ENCODE measurements at regions of chr2 and their contacts with region 1.

Region 1: DNA sequence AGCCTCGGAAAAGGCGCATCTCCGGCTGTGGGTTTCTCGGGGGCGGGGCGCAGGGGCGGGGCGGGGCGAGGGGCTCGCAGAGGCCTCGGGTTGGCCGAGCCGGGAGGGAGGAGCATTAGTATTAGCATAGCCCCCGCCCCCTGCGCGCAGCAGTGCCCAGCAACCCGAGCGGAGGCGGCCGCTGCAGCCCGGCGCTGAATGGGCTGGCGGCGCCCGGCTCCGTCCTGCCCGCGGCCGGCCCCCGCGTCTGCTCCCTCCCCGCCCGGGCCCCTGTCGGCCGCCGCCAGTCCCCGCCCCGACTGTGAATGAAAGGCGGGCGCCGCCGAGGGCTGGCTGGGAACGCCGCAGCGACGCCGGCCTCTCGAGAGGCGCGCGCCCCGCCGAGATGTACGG is at the start of gene EFR3B:
- DNase-seq: peak; percentile 70 to 95 (median 88)
- ATAC-seq: peak; percentile 95
- H3K4me3 ChIP-seq: peak within 1 kb of the TSS; percentile 48 to 72
- H3K4me3 Mint-ChIP-seq: peak within 1 kb of the TSS; percentile 90
- H3K27ac ChIP-seq: no peak within 1 kb of the TSS
- H3K27ac Mint-ChIP-seq: peak within 1 kb of the TSS; percentile 6
- H3K4me1 ChIP-seq: peaks cover 17% of the 10 kb centered on the region
- H3K4me1 Mint-ChIP-seq: peaks cover 21% of the 10 kb centered on the region
- H3K27me3 ChIP-seq: peaks cover 3 to 16% of the 10 kb centered on the region in 2 experiments
- H3K27me3 Mint-ChIP-seq: peaks cover 35% of the 10 kb centered on the region
- CTCF ChIP-seq: no peak
- total RNA-seq, gene EFR3B: 0.08 TPM in 1 of 2 experiments, not detected in the other

Region 2: GRCh38 chr2:24490674-24491625 is 551.0 kb before region 1 on chr2 and contains the start of gene NCOA1:
- CTCF ChIA-PET with region 1: no interaction called
- POLR2A ChIA-PET with region 1: no interaction called
- intact Hi-C with region 1: loop called (anchors 5 to 10 kb)
- DNase-seq: peak; percentile 77 to 94 (median 89)
- ATAC-seq: peak; percentile 85
- H3K4me3 ChIP-seq: peak within 1 kb of the TSS; percentile 63 to 72
- H3K4me3 Mint-ChIP-seq: peak within 1 kb of the TSS; percentile 89
- H3K27ac ChIP-seq: peak within 1 kb of the TSS; percentile 70 to 93
- H3K27ac Mint-ChIP-seq: peak within 1 kb of the TSS; percentile 94
- H3K4me1 ChIP-seq: peaks cover 37% of the 10 kb centered on the region
- H3K4me1 Mint-ChIP-seq: peaks cover 53% of the 10 kb centered on the region
- H3K27me3 ChIP-seq: no peaks in the 10 kb centered on the region
- H3K27me3 Mint-ChIP-seq: no peaks in the 10 kb centered on the region
- CTCF ChIP-seq: no peak
- total RNA-seq, gene NCOA1: 32.6 to 33.5 TPM

Region 3: GRCh38 chr2:24920098-24920808 is 121.7 kb before region 1 on chr2 and contains the start of gene ADCY3:
- CTCF ChIA-PET with region 1: no interaction called
- POLR2A ChIA-PET with region 1: no interaction called
- intact Hi-C with region 1: loop called (anchors 2 to 5 kb)
- DNase-seq: peak; percentile 17 to 81 (median 58)
- ATAC-seq: peak; percentile 62
- H3K4me3 ChIP-seq: peak within 1 kb of the TSS; percentile 46 to 54
- H3K4me3 Mint-ChIP-seq: peak within 1 kb of the TSS; percentile 87
- H3K27ac ChIP-seq: peak within 1 kb of the TSS in 1 of 2 experiments; percentile 33
- H3K27ac Mint-ChIP-seq: peak within 1 kb of the TSS; percentile 77
- H3K4me1 ChIP-seq: peaks cover 35% of the 10 kb centered on the region
- H3K4me1 Mint-ChIP-seq: peaks cover 31% of the 10 kb centered on the region
- H3K27me3 ChIP-seq: no peaks in the 10 kb centered on the region
- H3K27me3 Mint-ChIP-seq: no peaks in the 10 kb centered on the region
- CTCF ChIP-seq: no peak
- total RNA-seq, gene ADCY3: 15.6 to 23.3 TPM

Region 4: GRCh38 chr2:25151718-25152117 is 109.8 kb after region 1 on chr2:
- CTCF ChIA-PET with region 1: no interaction called
- POLR2A ChIA-PET with region 1: no interaction called
- intact Hi-C with region 1: no loop called
- DNase-seq: no peak
- ATAC-seq: no peak
- H3K4me3 ChIP-seq: no peak overlapping the region
- H3K4me3 Mint-ChIP-seq: no peak overlapping the region
- H3K27ac ChIP-seq: no peak overlapping the region
- H3K27ac Mint-ChIP-seq: no peak overlapping the region
- H3K4me1 ChIP-seq: no peaks in the 10 kb centered on the region
- H3K4me1 Mint-ChIP-seq: no peaks in the 10 kb centered on the region
- H3K27me3 ChIP-seq: no peaks in the 10 kb centered on the region
- H3K27me3 Mint-ChIP-seq: peaks cover 4% of the 10 kb centered on the region
- CTCF ChIP-seq: no peak

Region 5: DNA sequence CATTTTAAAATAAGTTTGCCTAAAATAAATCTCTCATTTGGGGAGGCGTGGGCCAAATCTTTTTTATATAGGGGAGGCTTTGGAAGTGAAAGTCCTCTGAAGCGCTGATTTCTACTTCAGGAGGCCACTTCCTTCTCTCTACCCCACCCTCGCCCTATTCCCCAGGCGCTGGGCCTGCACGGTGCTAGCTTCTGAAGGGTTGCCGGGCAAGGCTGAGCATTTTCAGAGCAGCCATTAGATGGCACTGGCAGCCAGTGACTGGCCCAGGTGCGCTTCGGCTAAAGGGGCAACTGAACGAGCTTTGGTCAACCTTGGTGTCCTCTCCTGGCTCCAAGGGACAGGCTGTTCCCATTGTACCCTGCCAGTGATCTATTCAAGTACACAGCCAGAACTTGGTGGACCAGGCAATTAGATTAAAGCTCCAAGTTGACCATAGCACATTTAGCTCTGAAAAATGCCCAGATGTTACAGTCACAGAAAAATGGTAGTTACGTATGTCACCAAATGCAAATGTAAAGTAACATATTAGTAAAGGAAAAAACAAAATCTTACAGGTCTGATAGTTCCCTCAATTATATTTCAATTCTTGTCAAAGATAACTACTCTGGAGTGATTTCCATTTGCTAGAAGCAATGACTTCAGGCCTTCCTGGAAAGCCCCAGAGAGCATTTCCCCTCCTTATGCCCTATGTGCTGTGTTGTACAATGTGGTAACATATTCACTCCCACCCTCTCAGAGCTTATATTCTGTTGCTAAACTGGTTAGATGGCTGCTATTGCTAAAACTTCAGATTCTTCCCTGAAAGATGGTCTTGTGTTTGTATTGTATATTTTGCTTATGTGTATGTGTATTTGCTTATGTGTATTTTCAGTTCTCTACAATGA is 124.3 kb after region 1 on chr2:
- CTCF ChIA-PET with region 1: no interaction called
- POLR2A ChIA-PET with region 1: no interaction called
- intact Hi-C with region 1: loop called in 1 of 2 experiments (anchors 5 kb)
- DNase-seq: peak in 8 of 9 experiments; percentile 21 to 77 (median 46)
- ATAC-seq: peak; percentile 52
- H3K4me3 ChIP-seq: no peak overlapping the region
- H3K4me3 Mint-ChIP-seq: no peak overlapping the region
- H3K27ac ChIP-seq: no peak overlapping the region
- H3K27ac Mint-ChIP-seq: no peak overlapping the region
- H3K4me1 ChIP-seq: peaks cover 13% of the 10 kb centered on the region
- H3K4me1 Mint-ChIP-seq: peaks cover 23% of the 10 kb centered on the region
- H3K27me3 ChIP-seq: peaks cover 8 to 20% of the 10 kb centered on the region in 2 experiments
- H3K27me3 Mint-ChIP-seq: peaks cover 34% of the 10 kb centered on the region
- CTCF ChIP-seq: peak; percentile 22

Region 6: GRCh38 chr2:25673300-25674076 is 631.6 kb after region 1 on chr2 and contains the start of gene DTNB:
- CTCF ChIA-PET with region 1: no interaction called
- POLR2A ChIA-PET with region 1: no interaction called
- intact Hi-C with region 1: loop called in 1 of 2 experiments (anchors 5 kb)
- DNase-seq: peak; percentile 52 to 91 (median 77)
- ATAC-seq: peak; percentile 73
- H3K4me3 ChIP-seq: peak within 1 kb of the TSS; percentile 75 to 76
- H3K4me3 Mint-ChIP-seq: peak within 1 kb of the TSS; percentile 88
- H3K27ac ChIP-seq: peak within 1 kb of the TSS; percentile 62 to 70
- H3K27ac Mint-ChIP-seq: peak within 1 kb of the TSS; percentile 83
- H3K4me1 ChIP-seq: peaks cover 15% of the 10 kb centered on the region
- H3K4me1 Mint-ChIP-seq: peaks cover 33% of the 10 kb centered on the region
- H3K27me3 ChIP-seq: no peaks in the 10 kb centered on the region
- H3K27me3 Mint-ChIP-seq: no peaks in the 10 kb centered on the region
- CTCF ChIP-seq: no peak
- total RNA-seq, gene DTNB: 27.1 to 33.2 TPM